Endothelial cell of umbilical vein (primary cell): ENCODE measurements at regions of chr11 and their contacts with region 1.

Region 1: DNA sequence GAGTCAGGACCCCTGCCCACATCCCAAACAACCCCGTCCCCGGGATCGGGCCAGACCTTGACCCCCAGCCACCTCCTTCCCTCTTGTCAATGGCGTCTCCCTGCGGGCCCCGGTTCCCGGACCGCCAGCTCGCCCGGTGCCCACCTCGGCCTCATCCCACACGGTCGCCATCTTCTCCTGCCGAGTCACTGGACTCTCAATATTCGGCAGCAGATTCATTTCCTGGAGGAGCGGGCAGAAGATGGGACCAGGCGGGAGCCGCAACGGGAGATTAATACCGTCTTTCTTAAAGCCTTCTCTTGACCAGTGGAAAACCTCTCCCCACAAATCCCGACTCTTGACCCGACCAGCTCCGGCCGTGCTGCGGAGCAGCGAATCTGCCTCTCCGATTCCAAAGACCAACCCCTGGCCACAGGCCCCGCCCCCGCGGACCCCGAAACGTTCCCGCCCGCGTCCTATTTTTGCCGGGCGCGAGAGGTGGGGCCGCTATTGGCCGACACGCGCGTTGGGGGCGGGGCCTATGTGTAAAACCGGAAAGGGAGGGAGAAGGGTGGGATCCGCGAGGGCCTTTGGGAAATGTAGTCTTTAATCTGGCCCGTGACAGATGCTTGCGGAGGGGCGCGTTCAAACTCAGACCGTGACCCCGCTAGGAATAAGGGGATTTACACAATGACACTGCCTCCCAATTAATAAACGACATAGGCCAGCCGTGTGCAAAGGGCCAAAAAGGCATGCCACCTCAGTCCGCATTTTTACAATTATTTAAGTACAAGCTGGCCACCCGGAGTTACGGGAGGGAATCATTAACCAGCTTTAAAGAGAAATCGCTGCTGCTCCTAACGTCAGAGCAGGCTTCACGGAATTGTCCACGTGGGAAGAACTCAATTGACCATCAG is at the start of gene PSMC3:
- DNase-seq: peak; percentile 97
- H3K4me3 ChIP-seq: peak within 1 kb of the TSS; percentile 68 to 89 (median 79)
- H3K27ac ChIP-seq: peak within 1 kb of the TSS; percentile 90
- H3K4me1 ChIP-seq: peaks cover 10% of the 10 kb centered on the region
- H3K27me3 ChIP-seq: no peaks in the 10 kb centered on the region
- CTCF ChIP-seq: no peak
- POLR2A ChIP-seq: peak; percentile 80
- total RNA-seq, gene PSMC3: 202 and 203 TPM in 2 replicates

Region 2: DNA sequence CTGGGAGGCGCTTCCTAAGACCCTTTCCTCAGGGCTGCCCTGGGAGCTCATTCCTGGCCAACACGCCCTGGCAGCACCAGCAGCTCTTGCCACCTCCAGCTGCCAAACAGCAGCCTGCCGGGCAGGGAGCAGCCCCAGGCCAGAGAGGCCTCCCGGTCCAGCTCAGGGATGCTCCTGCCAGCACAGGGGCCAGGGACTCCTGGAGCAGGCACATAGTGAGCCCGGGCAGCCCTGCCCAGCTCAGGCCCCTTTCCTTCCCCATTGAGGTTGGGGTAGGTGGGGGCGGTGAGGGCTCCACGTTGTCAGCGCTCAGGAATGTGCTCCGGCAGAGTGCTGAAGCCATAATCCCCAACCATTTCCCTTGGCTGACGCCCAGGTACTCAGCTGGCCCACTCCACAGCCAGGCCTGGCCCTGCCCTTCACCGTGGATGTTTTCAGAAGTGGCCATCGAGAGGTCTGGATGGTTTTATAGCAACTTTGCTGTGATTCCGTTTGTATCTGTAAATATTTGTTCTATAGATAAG is 10.3 kb before region 1 on chr11:
- CTCF ChIA-PET with region 1: interaction called, 16 read pairs
- POLR2A ChIA-PET with region 1: interaction called, 7 read pairs
- dilution Hi-C with region 1: no loop called
- intact Hi-C with region 1: loop called (anchors 1 kb)
- DNase-seq: peak; percentile 88
- H3K4me3 ChIP-seq: no peak overlapping the region
- H3K27ac ChIP-seq: peak overlapping the region; percentile 51
- H3K4me1 ChIP-seq: peaks cover 16% of the 10 kb centered on the region
- H3K27me3 ChIP-seq: no peaks in the 10 kb centered on the region
- CTCF ChIP-seq: no peak
- POLR2A ChIP-seq: peak; percentile 76

Region 3: DNA sequence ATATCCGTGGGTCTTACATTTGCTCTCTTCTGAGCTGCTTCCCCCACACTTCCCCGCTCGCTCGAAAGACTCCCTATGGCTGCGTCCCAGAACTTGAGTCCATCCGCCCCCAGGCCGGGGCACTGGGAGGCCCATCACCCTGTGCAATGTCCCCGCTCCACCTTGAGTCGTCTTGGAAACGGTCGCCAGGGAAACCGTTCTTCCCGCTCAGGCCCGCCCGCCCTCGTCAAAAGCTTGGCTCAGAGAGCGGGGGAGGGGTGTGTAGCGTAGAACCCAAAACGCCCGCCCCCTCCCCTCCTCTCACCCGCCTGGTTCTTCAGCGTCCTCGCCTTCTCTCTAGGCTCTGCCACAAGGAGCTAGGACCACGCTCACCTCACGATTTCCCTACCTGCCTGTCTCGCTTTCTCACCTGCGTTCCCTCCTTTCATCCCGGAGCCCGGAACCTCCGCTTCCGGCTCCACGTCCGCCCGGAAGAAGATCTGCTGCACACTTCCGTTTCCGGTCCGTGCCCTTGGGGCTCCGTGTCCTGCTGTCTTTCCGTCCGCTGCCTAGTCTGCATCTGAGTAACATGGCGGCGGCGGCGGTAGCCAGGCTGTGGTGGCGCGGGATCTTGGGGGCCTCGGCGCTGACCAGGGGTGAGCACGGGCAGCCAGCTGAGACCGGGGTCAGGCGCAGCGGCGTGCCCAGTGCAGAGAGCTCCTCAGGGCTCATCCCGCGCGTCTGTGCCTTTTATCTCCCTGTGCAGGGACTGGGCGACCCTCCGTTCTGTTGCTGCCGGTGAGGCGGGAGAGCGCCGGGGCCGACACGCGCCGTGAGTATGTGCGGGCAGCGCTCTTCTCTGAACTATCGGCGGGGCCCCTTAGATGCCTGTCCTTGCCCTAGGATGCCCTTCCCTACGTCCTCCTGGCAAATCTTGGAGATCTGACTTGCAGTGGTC is 152.5 kb after region 1 on chr11 and contains the starts of genes KBTBD4 and NDUFS3:
- CTCF ChIA-PET with region 1: no interaction called
- POLR2A ChIA-PET with region 1: no interaction called
- dilution Hi-C with region 1: no loop called
- intact Hi-C with region 1: loop called (anchors 5 kb)
- DNase-seq: peak; percentile 84
- H3K4me3 ChIP-seq: peak within 1 kb of the TSS; percentile 64 to 77 (median 73)
- H3K27ac ChIP-seq: peak within 1 kb of the TSS; percentile 47
- H3K4me1 ChIP-seq: peaks cover 23% of the 10 kb centered on the region
- H3K27me3 ChIP-seq: no peaks in the 10 kb centered on the region
- CTCF ChIP-seq: no peak
- POLR2A ChIP-seq: peak; percentile 63
- total RNA-seq, gene KBTBD4: 16.3 and 16.6 TPM in 2 replicates
- total RNA-seq, gene NDUFS3: 91.8 and 99.7 TPM in 2 replicates